ENCODE measurements at regions of chr16 and their contacts with region 1.

Region 1: GRCh38 chr16:2874912-2875362 is 8.1 kb upstream of the FLYWCH2 start:
- DNase-seq: peak; percentile 90
- ATAC-seq: peak; percentile 98 to 99
- H3K4me3 ChIP-seq: no peak overlapping the region
- H3K27ac ChIP-seq: no peak overlapping the region
- H3K4me1 ChIP-seq: no peaks in the 10 kb centered on the region
- H3K27me3 ChIP-seq: no peaks in the 10 kb centered on the region
- CTCF ChIP-seq: peak; percentile 92

Region 2: DNA sequence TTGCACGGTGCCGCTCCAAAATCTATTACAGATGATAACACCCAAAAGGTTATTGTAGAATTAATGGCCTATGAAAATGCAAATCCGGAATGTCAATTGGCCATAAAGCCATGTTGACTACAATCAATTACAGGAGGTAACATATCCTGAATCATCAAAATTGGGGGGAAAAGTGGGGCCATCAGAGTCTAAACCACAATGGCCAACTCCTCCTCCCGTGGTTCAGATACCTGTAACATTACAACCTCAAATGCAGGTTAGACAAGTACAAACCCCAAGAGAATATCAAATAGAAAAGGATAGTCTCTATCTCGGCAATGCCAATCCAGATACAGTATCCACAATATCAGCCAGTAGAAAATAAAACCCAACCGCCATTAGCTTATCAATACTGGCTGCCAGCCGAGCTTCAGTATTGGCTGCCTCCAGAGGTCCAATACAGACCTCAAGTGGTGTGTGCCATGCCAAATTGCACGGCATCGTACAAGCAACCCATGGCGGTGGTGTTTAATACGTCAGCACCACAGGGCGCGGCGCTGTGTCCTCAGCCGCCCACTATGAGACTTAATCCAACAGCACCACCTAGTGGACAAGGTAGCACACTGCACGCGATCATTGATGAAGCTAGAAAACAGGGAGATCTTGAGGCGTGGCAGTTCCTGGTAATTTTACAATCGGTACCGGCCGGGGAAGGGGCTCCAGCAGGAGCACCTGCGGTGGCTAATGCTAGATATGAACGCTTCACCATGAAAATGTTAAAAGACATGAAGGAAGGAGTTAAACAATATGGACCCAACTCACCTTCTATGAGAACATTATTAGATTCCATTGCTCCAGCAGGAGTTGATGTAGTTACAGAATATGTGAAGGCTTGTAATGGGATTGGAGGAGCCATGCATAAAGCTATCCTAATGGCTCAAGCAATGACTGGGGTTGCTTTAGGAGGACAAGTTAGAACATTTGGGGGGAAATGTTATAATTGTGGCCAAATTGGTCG is 52.0 kb after region 1 on chr16:
- intact Hi-C with region 1: loop called (anchors 10 kb)
- DNase-seq: peak; percentile 94
- ATAC-seq: peak; percentile 95 to 97
- H3K4me3 ChIP-seq: no peak overlapping the region
- H3K27ac ChIP-seq: no peak overlapping the region
- H3K4me1 ChIP-seq: peaks cover 10% of the 10 kb centered on the region
- H3K27me3 ChIP-seq: no peaks in the 10 kb centered on the region
- CTCF ChIP-seq: peak; percentile 99